ENCODE measurements at regions of chr2 and their contacts with region 1.

Region 1: DNA sequence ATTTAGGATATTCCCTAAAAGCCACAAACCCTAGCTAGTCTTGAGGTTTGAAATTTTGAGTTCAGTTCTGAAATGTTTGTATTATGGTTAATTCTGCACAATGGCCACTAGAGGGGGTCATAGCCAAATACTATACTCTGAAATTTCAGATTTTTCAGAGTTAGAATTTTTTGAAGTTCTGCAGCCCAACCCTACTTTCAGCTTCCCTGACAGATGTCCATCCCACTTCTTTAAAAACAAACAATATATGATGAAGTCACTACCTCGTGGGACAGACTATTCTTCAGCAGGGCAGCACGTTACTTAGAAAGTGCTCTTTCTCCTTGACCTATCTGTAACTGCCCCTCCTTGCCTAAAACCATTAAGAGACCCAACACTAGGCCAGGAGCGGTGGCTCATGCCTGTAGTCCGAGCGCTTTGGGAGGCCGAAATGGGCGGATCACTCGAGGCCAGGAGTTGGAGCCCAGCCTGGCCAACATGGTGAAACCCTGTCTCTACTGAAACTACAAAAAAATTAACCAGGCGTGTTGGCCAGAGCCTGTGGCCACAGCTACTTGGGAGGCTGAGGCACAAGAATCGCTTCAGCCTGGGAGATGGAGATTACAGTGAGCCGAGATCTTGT is 48.2 kb upstream of the PAPOLG start:
- DNase-seq: no peak
- H3K4me3 ChIP-seq: no peak overlapping the region
- H3K27ac ChIP-seq: no peak overlapping the region
- H3K4me1 ChIP-seq: no peaks in the 10 kb centered on the region
- H3K27me3 ChIP-seq: no peaks in the 10 kb centered on the region
- CTCF ChIP-seq: peak; percentile 55 to 69 (median 64)
- POLR2A ChIP-seq: no peak

Region 2: DNA sequence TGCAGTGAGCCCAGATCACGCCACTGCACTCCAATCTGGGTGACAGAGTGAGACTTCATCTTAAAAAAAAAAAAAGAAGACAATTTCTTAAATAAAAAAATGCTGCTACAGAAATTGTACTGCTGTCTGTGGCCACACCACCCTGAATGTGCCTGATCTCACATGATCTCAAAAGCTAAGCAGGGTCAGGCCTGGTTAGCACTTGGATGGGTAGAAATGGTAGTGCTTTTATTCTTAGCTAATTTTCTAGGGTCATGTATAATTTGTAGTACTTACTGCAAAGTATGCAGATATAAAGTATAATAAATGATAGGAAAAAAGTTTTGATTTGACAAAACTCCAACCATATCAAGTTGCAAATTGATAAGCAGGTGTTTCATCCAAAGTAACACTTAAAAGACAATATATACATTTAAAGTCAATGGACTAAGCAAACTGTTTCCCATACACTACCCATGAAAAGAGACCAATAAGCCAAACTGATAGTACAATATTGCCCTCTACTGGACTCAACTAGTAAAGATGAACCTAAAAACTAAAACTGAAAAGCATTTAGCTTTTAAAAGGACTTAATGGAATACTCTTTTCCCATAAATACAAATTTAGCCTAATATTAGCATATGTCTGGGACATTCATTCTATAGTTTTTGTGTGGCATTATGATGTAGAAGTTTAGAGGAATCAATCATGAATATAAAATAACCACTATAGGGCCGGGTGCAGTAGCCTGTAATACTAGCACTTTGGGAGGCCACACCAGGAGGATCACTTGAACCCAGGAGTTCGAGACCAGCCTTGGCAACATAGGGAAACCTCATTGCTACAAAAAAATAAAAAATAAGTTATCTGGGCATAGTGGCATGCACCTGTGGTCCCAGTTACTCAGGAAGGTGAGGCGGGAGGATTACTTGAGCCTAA is 291.0 kb after region 1 on chr2:
- intact Hi-C with region 1: loop called (anchors 5 kb)
- DNase-seq: no peak
- H3K4me3 ChIP-seq: no peak overlapping the region
- H3K27ac ChIP-seq: no peak overlapping the region
- H3K4me1 ChIP-seq: no peaks in the 10 kb centered on the region
- H3K27me3 ChIP-seq: no peaks in the 10 kb centered on the region
- CTCF ChIP-seq: peak; percentile 49 to 61 (median 56)
- POLR2A ChIP-seq: no peak